Dorsolateral prefrontal cortex (tissue), 120 donors: ENCODE measurements at regions of chr4 and their contacts with region 1.

Region 1: DNA sequence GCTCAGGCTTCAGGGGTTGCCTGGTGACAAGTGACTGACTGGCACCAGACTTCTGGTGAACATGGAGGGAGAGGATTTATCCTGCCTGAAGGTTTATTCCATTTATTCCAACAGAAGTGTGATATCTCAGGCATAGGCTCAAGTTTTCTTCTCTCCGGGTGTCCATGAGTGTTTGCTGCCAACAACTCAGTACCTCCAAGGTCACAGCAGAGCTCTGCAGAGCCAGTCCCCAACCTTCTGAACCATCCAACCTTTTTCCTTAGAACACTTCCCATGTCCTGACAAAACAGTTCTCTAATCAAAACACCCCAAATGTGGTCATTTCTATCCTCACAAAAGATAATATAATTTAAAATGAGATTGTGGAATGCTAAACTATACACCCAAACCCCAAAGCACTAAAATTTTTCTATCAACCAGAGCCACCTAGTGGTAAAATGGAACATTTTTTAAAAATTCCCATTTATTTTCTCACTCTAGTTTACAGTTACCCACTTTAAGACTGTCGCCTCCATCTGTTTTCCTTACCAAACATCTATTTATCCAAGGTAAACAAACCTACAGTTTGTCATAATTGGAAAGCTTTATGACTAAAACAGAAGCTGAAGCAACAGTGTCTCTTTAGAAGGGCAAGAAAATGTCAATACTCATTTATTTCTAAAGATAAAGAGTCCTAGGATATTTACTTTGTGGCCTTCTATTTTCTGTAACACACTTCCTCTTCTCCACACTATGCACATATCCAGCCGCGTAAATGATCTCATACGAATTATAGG is 39.6 kb downstream of the TMEM154 start:
- DNase-seq: no peak
- H3K4me3 ChIP-seq: no peak overlapping the region
- H3K27ac ChIP-seq: no peak overlapping the region
- H3K27me3 ChIP-seq: no peaks in the 10 kb centered on the region
- CTCF ChIP-seq: peak; percentile 64 to 90 (median 76)

Region 2: DNA sequence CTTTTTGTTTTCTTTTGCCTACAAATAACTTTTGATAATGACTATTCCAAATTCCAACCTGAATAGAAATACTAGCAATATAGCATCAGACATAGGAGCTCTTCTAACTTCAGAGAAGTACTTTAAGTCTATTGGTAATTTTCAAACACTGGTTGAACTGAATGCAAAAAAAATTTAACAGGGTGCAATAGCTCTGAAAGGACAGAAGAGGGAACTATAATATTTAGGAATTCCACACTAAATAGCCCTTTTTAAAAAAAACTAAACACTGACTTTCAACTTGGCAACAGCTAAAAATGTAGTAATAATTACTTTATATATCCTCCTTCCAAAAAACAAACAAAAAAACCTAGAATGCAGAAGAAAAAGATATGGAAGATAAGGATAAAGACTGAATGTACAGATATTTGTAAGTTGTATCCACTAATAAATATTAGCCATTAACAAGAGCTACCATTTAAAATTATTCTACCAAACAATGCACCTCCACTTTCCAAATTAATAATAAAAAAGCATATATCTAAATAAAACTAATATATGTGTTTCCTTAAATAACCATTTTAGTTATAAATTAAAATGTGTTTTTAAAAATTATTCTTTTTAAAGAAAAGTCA is 185.7 kb before region 1 on chr4:
- intact Hi-C with region 1: loop called in 1 of 2 experiments (anchors 5 kb)
- DNase-seq: no peak
- H3K4me3 ChIP-seq: no peak overlapping the region
- H3K27ac ChIP-seq: no peak overlapping the region
- H3K27me3 ChIP-seq: no peaks in the 10 kb centered on the region
- CTCF ChIP-seq: peak; percentile 45 to 79 (median 64)

Region 3: GRCh38 chr4:152479428-152480026 is 160.7 kb before region 1 on chr4:
- intact Hi-C with region 1: no loop called
- DNase-seq: no peak
- H3K4me3 ChIP-seq: no peak overlapping the region
- H3K27ac ChIP-seq: no peak overlapping the region
- H3K27me3 ChIP-seq: no peaks in the 10 kb centered on the region
- CTCF ChIP-seq: no peak

Region 4: DNA sequence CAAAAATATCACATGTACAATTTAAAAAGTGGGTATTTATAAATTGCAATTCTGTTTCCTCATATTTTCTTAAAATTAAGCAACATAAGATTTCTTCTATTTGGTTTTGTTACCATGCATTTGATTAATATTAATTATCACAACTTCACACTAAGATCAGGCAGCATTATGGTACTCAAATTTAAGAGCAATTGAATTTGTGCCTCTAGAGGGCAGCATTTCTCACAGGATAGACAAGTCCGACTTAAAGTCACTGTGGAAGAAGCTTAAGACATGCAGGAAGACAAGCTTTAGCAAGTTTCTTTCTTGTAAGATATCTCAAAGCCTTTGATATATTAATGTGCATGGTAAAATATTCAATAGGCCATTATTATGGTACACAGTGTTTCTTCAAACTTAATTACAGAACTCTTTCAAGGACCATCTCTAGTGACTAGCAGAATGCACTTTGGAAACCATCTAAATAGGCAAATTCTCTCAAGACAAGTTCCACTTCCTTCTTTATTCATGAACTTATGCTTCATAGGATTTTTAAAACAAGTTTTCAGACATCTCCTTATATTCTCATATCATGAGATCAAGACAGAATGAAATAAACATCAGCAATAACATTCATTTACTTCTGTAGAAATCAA is 139.3 kb before region 1 on chr4:
- intact Hi-C with region 1: loop called (anchors 2 to 5 kb)
- DNase-seq: peak in 2 of 10 donors; percentile 41 to 45
- H3K4me3 ChIP-seq: no peak overlapping the region
- H3K27ac ChIP-seq: no peak overlapping the region
- H3K27me3 ChIP-seq: no peaks in the 10 kb centered on the region
- CTCF ChIP-seq: peak; percentile 67 to 97 (median 84)

Region 5: GRCh38 chr4:153257151-153257620 is 616.9 kb after region 1 on chr4:
- intact Hi-C with region 1: no loop called
- DNase-seq: peak; percentile 54 to 91 (median 84)
- H3K4me3 ChIP-seq: peak overlapping the region; percentile 22 to 72 (median 60)
- H3K27ac ChIP-seq: peak overlapping the region in 57 of 59 donors; percentile 15 to 92 (median 78)
- H3K27me3 ChIP-seq: no peaks in the 10 kb centered on the region
- CTCF ChIP-seq: peak in 2 of 56 donors; percentile 10 to 11